Posterior vena cava (tissue), 2 donors: ENCODE measurements at regions of chr18 and their contacts with region 1.

Region 1: GRCh38 chr18:10188971-10189810 is 265.2 kb upstream of the APCDD1 start:
- DNase-seq: no peak

Region 2: GRCh38 chr18:10454674-10455557 is 265.7 kb after region 1 on chr18:
- intact Hi-C with region 1: loop called in 1 of 2 experiments (anchors 5 kb)
- DNase-seq: peak; percentile 84